Naive thymus-derived CD4-positive, alpha-beta T cell (primary cell): ENCODE measurements at regions of chr10 and their contacts with region 1.

Region 1: DNA sequence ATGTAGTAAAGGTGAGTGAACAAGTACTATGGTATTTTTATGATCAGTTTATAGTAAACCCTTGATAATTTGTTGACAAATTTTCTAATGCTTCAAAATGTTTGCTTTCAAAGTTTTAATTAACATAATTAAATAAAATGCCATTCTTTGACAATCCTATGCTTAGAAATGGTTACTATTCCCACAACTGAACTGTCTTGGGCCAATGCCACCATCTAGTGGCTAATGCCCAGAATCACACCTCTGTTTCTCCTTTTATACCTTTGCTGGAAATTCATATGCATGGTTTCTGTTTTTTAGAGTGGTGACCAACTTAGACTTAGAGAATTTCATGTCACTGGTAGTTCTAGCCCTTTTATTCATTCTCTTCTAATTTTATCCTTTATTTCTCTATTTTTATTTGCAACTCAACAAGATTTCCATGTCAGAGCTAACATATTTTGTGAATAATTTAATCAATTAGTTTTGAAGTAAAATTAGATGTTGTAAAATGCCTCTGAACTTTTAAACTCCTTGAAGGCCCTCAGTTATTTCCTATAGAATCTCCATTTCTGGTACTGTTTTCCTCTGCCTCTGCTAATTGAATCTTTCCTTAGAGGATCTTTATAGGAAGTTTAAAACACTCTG is 31.1 kb downstream of the PCGF5 start:
- DNase-seq: peak; percentile 16 to 72 (median 64)
- ATAC-seq: peak; percentile 89
- H3K4me3 ChIP-seq: no peak overlapping the region
- H3K4me3 Mint-ChIP-seq: no peak overlapping the region
- H3K27ac ChIP-seq: no peak overlapping the region
- H3K27ac Mint-ChIP-seq: no peak overlapping the region
- H3K4me1 ChIP-seq: peaks cover under 1 to 13% of the 10 kb centered on the region in 2 donors
- H3K4me1 Mint-ChIP-seq: peaks cover 5 to 15% (median 9%) of the 10 kb centered on the region in 7 donors
- H3K27me3 ChIP-seq: no peaks in the 10 kb centered on the region
- H3K27me3 Mint-ChIP-seq: no peaks in the 10 kb centered on the region

Region 2: DNA sequence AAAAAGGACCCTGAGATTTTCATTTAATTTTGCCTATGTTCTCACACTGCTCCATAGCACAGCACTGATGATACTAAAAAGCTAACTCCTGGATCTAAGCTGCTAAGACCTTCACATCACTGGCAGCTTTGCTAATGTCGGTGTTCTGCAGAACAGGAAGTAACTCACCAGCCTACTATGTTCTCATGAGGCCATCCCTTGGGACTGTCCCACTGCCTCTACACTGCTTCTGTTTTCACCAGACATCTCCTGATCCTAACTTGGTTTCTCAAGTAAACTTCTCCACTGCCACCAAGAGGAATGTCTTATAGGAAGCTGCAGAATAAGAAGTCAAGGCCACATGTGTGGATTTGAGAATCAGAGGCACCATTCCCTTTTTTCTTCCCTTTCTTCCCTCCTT is 408.8 kb before region 1 on chr10:
- CTCF ChIA-PET with region 1: no interaction called
- POLR2A ChIA-PET with region 1: no interaction called
- intact Hi-C with region 1: no loop called
- DNase-seq: no peak
- ATAC-seq: no peak
- H3K4me3 ChIP-seq: no peak overlapping the region
- H3K4me3 Mint-ChIP-seq: no peak overlapping the region
- H3K27ac ChIP-seq: no peak overlapping the region
- H3K27ac Mint-ChIP-seq: no peak overlapping the region
- H3K4me1 ChIP-seq: no peaks in the 10 kb centered on the region
- H3K4me1 Mint-ChIP-seq: peaks cover 0 to 7% (median 0%) of the 10 kb centered on the region in 7 donors
- H3K27me3 ChIP-seq: no peaks in the 10 kb centered on the region
- H3K27me3 Mint-ChIP-seq: peaks cover 25 to 38% (median 32%) of the 10 kb centered on the region in 5 donors

Region 3: GRCh38 chr10:90885176-90885575 is 366.4 kb before region 1 on chr10:
- CTCF ChIA-PET with region 1: interaction called, 6 read pairs
- POLR2A ChIA-PET with region 1: no interaction called
- intact Hi-C with region 1: loop called (anchors 1 to 2 kb)
- DNase-seq: no peak
- ATAC-seq: no peak
- H3K4me3 ChIP-seq: no peak overlapping the region
- H3K4me3 Mint-ChIP-seq: no peak overlapping the region
- H3K27ac ChIP-seq: no peak overlapping the region
- H3K27ac Mint-ChIP-seq: no peak overlapping the region
- H3K4me1 ChIP-seq: no peaks in the 10 kb centered on the region
- H3K4me1 Mint-ChIP-seq: peaks cover 0 to 8% (median 4%) of the 10 kb centered on the region in 7 donors
- H3K27me3 ChIP-seq: no peaks in the 10 kb centered on the region
- H3K27me3 Mint-ChIP-seq: no peaks in the 10 kb centered on the region

Region 4: DNA sequence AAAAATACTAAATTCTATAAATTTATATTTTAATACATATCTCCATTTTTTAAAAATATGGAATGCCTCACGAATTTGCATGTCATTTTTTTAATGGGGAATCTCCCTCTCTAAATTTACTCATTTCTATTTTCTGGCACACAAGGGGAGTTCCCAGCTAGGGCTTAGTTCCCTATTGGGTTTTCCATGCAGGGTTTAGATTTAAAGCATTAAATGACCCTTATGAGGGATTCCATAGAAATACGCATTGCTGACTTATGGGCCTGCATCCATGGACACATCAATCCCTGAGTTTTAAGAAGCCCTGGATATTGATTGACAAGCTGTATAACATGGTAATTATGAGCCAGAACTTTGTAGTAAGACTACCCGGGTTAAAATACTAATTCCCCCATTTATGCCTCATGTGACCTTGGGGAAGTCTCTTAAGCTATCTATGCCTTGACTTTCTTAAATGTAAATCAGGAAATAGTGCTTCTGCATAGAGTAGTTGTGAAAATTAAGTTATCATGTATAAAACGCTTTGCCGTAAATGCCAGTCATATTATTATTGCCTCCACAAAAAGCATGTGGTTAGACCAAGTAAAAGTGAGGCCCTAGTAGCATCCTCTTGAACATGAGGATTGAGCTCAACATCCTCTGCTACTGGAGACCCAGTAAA is 251.9 kb before region 1 on chr10:
- CTCF ChIA-PET with region 1: interaction called, 148 read pairs
- POLR2A ChIA-PET with region 1: no interaction called
- intact Hi-C with region 1: no loop called
- DNase-seq: no peak
- ATAC-seq: no peak
- H3K4me3 ChIP-seq: no peak overlapping the region
- H3K4me3 Mint-ChIP-seq: no peak overlapping the region
- H3K27ac ChIP-seq: no peak overlapping the region
- H3K27ac Mint-ChIP-seq: no peak overlapping the region
- H3K4me1 ChIP-seq: no peaks in the 10 kb centered on the region
- H3K4me1 Mint-ChIP-seq: no peaks in the 10 kb centered on the region
- H3K27me3 ChIP-seq: no peaks in the 10 kb centered on the region
- H3K27me3 Mint-ChIP-seq: peaks cover 0 to 14% (median 0%) of the 10 kb centered on the region in 5 donors

Region 5: DNA sequence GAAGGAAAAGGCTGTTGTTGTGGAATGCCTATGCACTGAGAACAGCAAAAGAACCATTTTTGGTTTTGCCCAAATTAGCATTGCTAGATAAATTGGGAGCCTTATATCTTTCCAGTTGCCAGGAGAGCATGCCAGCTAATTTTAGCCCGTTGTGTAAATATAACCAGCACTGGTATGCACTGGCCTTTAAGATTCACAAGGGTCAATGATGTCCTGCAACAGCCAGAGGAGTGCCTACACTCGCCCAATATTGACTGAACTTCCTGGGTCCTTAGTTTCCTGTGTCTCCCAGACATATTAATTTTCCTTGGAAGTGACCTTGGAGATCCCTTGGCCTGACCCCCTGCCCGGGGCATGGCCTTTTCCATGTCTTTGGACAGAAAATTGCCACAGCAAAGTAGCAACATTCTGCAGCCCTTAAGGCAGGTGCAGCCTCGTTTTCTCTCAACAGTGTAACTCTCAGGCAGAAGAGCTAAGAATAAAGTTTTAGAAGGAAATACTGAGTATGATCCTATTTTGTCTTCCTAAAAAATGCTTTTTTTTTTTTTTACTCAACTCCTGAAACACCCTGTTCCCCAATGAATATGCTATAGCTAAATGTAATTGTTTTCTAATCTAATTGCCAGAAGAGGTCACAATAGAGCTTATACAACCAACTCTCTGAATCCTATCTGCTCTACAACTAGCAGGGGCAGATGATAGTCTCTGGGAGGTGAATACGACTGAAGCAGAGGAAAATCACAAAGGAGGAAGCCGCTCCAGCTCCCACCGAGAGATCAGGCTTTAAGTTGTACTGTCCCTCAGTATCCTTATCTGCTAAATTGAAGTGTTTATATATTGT is 163.0 kb before region 1 on chr10:
- CTCF ChIA-PET with region 1: interaction called, 107 read pairs
- POLR2A ChIA-PET with region 1: interaction called, 6 read pairs
- intact Hi-C with region 1: loop called (anchors 1 kb)
- DNase-seq: peak in 6 of 9 donors; percentile 10 to 37 (median 26)
- ATAC-seq: peak; percentile 64
- H3K4me3 ChIP-seq: no peak overlapping the region
- H3K4me3 Mint-ChIP-seq: no peak overlapping the region
- H3K27ac ChIP-seq: no peak overlapping the region
- H3K27ac Mint-ChIP-seq: peak overlapping the region in 2 of 9 donors; percentile 15 to 42
- H3K4me1 ChIP-seq: no peaks in the 10 kb centered on the region
- H3K4me1 Mint-ChIP-seq: peaks cover 0 to 2% (median 0%) of the 10 kb centered on the region in 7 donors
- H3K27me3 ChIP-seq: no peaks in the 10 kb centered on the region
- H3K27me3 Mint-ChIP-seq: peaks cover 0 to 11% (median 0%) of the 10 kb centered on the region in 5 donors

Region 6: DNA sequence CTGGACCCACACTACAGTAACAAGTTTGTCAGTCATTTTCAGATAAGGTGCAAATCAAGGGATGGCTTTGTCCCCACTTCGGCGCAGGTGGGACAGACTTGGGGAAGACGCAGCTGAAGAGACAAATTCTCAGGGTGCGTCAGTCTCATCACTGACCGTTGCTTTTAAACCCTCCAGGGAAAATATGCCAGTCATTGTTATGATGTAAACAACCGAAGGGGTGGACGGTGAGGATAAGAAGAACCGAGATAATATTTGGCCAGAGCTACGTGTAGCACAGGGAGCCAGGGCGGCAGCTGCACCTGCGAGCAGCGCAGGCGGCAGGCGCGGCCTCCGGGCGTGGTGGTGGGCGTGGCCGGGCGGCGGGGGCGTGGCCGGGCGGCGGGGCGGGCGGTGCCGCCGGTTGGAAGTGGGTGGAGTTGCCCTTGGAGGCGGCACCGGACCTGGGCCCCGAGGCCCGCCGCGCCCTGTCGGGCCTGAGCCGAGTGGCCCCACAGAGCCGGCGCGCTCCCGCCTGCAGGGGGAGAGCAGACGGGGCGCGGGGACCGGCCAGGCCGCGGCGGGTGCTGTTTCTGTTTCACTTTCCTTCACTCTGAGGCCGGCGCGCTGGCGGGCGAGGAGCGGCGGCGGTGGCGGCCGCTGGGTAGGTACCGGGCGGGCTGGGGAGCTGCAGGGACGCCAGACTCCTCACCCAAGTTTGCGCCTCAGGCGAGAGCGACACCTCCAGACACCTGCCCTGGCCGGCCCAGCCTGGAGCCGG is 31.2 kb before region 1 on chr10 and contains the start of gene PCGF5:
- CTCF ChIA-PET with region 1: interaction called, 4 read pairs
- POLR2A ChIA-PET with region 1: interaction called, 3 read pairs
- intact Hi-C with region 1: loop called (anchors 2 kb)
- DNase-seq: peak; percentile 82 to 98 (median 90)
- ATAC-seq: peak; percentile 98
- H3K4me3 ChIP-seq: peak within 1 kb of the TSS; percentile 68
- H3K4me3 Mint-ChIP-seq: peak within 1 kb of the TSS; percentile 84 to 96 (median 90)
- H3K27ac ChIP-seq: peak within 1 kb of the TSS; percentile 90
- H3K27ac Mint-ChIP-seq: peak within 1 kb of the TSS; percentile 76 to 95 (median 89)
- H3K4me1 ChIP-seq: peaks cover 28 to 34% of the 10 kb centered on the region in 2 donors
- H3K4me1 Mint-ChIP-seq: peaks cover 33 to 69% (median 55%) of the 10 kb centered on the region in 7 donors
- H3K27me3 ChIP-seq: no peaks in the 10 kb centered on the region
- H3K27me3 Mint-ChIP-seq: no peaks in the 10 kb centered on the region
- total RNA-seq, gene PCGF5: 41.2 to 62.3 (median 57.4) TPM

Region 7: DNA sequence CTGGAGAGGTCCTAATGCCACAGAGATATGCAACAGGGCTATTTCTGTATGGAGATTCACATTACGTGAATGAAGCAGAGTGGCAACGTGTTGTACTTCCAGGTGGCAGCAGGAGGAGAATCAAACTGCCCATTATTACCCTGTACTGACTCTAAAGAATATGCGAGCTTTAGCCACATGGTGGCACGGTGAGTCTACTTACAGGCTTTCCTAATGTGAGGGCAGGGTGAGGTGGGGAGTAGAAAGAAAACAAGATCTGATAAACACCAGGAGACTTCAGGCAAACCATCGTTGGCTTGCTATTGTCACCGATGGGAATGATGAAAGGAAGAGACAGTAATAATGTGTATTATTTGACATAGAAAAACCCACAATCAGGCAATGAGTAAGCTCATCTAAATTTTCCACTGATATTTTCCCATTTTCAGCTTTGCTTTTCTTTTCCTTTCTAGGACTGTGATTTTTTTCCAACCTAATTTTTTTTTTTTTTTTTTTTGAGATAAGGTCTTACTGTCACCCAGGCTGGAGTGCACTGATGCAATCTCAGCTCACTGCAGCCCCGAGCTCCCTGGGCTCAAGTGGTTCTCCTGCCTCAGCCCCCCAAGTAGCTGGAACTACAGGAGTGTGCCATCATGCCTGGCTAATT is 836.3 kb after region 1 on chr10:
- CTCF ChIA-PET with region 1: no interaction called
- POLR2A ChIA-PET with region 1: no interaction called
- intact Hi-C with region 1: no loop called
- DNase-seq: peak in 8 of 9 donors; percentile 26 to 58 (median 39)
- ATAC-seq: peak; percentile 95
- H3K4me3 ChIP-seq: no peak overlapping the region
- H3K4me3 Mint-ChIP-seq: no peak overlapping the region
- H3K27ac ChIP-seq: no peak overlapping the region
- H3K27ac Mint-ChIP-seq: peak overlapping the region in 1 of 9 donors; percentile 62
- H3K4me1 ChIP-seq: no peaks in the 10 kb centered on the region
- H3K4me1 Mint-ChIP-seq: peaks cover 0 to 5% (median 2%) of the 10 kb centered on the region in 7 donors
- H3K27me3 ChIP-seq: no peaks in the 10 kb centered on the region
- H3K27me3 Mint-ChIP-seq: peaks cover 0 to 1% (median 0%) of the 10 kb centered on the region in 5 donors